AG04450 (cell line): ENCODE measurements at regions of chr17 and their contacts with region 1.

Region 1: GRCh38 chr17:54992797-54993639 is 24.5 kb downstream of the STXBP4 start:
- DNase-seq: no peak
- H3K4me3 ChIP-seq: no peak overlapping the region
- H3K27ac ChIP-seq: no peak overlapping the region
- H3K27me3 ChIP-seq: no peaks in the 10 kb centered on the region
- CTCF ChIP-seq: peak; percentile 65

Region 2: DNA sequence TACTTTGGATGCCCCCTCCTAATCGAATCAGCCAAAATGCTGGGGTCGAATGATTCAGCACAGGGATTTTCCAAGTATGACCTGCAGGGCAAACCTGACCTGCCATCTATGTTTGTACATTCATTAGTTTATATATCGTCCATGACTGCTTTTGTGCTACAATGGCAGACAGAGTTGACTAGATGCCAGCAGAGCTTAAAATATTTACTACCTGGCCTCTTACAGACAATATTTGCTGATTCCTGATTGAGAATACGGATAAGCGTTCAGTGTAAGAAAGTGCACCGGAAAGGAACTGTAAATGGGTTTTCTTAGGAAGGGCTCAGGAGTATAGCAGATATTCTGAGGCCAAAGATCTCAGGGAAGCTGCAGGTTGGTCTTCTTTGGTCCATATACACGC is 104.0 kb before region 1 on chr17:
- CTCF ChIA-PET with region 1: no interaction called
- POLR2A ChIA-PET with region 1: no interaction called
- DNase-seq: no peak
- H3K4me3 ChIP-seq: no peak overlapping the region
- H3K27ac ChIP-seq: no peak overlapping the region
- H3K27me3 ChIP-seq: no peaks in the 10 kb centered on the region
- CTCF ChIP-seq: no peak

Region 3: DNA sequence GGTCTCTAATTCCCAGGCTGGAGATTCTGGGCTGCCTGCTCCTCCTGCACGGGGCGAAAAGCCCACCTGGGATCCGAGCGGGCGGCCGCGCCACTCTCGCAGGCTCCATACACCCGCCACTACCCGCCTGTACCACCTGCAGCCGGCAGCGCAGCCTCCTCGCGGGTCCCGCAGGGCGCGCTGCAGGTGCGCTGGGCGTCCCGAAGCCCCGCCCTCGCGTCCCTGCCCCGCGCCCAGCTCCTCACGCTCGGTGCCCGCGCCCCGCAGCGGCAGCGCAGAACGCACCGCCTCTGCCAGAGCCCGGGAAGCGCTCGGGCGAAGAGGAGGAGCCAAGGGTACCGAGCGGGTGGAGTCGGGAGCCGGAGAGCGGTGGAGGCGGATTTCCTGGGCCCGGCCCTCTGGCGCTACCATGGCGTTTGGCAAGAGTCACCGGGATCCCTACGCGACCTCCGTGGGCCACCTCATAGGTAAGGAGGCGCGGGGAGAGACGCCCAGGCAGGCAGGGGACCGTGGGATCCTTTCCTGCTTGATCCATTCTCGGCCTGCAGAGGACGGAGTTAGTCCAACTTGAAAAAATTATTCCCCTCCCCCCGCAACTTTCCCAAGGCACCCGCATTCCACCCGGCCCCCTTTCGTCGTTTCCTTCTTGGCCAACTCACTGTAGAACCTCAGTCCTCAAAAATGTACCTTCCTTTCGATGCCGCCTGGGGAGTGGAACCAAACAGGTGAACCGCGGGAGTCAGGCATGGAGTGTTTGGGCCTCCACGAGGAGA is 92.4 kb before region 1 on chr17 and contains the start of gene TOM1L1:
- CTCF ChIA-PET with region 1: no interaction called
- POLR2A ChIA-PET with region 1: no interaction called
- DNase-seq: peak; percentile 16
- H3K4me3 ChIP-seq: peak within 1 kb of the TSS; percentile 89
- H3K27ac ChIP-seq: no peak within 1 kb of the TSS
- H3K27me3 ChIP-seq: no peaks in the 10 kb centered on the region
- CTCF ChIP-seq: peak; percentile 18; the same call in 1 of the 2 replicates
- polyA plus RNA-seq, gene TOM1L1: 25.6 and 37.8 TPM in 2 replicates

Region 4: DNA sequence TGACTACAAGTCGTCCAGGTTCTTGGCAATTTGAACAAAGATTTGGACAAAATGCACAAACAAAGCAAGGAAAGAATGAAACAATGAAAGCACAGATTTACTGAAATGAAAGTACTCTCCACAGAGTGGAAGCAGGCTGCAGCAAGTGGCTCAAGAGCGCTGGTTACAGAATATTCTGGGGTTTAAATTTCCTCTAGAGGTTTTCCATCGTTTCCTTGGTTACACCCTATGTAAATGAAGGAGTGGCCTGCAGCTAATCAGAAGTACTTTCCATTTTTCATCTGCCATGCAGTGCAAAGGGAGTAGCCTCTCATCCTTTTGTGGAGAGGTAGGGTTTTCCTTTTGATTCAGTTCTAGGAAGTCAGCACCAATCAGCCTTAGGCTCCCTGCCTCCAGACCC is 12.6 kb before region 1 on chr17:
- CTCF ChIA-PET with region 1: interaction called, 37 read pairs
- POLR2A ChIA-PET with region 1: no interaction called
- DNase-seq: no peak
- H3K4me3 ChIP-seq: no peak overlapping the region
- H3K27ac ChIP-seq: no peak overlapping the region
- H3K27me3 ChIP-seq: no peaks in the 10 kb centered on the region
- CTCF ChIP-seq: no peak

Region 5: GRCh38 chr17:55238179-55238930 is 245.3 kb after region 1 on chr17:
- CTCF ChIA-PET with region 1: interaction called, 24 read pairs
- POLR2A ChIA-PET with region 1: no interaction called
- DNase-seq: peak; percentile 73
- H3K4me3 ChIP-seq: peak overlapping the region; percentile 71
- H3K27ac ChIP-seq: no peak overlapping the region
- H3K27me3 ChIP-seq: peaks cover 2% of the 10 kb centered on the region
- CTCF ChIP-seq: no peak

Region 6: DNA sequence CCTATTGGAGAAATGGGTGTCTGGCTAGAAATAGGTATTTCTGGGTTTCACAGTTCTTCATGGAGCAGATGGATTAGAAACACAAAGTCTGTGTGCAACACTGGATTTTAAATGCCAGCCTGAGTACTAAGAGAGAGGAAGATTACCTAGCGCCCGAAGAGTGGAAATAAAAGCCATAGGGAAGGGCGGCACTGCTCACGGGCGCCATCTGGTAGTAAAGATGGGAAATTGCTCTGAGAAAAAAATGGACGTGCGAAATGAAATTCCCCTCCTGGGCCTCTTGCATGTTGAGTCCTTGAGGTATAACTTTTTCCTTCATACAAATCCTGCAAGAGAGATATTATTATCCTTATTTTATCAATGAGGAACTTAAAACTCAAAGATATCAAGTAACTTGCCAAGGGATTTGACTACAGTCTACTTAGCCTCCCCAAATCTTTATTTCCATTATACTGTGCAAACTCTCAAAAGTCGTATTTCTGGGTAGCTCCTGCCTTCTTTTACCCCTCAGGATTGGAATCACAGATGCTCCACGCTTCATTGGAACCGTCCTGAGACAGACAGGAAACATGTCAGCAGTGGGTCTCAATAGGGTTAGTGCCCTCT is 355.8 kb after region 1 on chr17:
- CTCF ChIA-PET with region 1: interaction called, 81 read pairs
- POLR2A ChIA-PET with region 1: no interaction called
- DNase-seq: peak; percentile 8
- H3K4me3 ChIP-seq: no peak overlapping the region
- H3K27ac ChIP-seq: no peak overlapping the region
- H3K27me3 ChIP-seq: peaks cover 6% of the 10 kb centered on the region
- CTCF ChIP-seq: peak; percentile 92